OCI-LY7 (cell line): ENCODE measurements at regions of chr12 and their contacts with region 1.

Region 1: DNA sequence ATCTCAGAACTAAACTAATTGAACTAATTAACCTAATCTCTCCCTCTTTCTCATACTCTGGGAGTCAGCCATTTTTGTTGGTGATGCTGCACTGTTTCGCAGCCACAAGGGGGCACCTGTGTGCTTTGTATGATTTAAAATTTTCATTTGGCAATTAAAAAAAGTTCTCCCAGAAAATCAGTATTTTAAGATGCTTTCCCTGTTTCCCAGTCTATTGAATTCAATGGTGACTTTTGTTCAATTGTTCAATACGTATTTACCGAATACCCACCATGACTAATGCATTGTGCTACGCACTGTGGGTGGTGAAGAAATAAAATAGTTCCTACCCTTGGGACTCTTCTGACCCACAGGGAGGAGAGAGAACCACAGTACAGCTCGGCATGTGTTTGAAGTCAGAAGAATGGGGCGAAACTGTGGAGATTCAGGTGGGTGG is 63.7 kb downstream of the ZNF664 start:
- DNase-seq: peak; percentile 53
- H3K4me3 ChIP-seq: no peak overlapping the region
- H3K27ac ChIP-seq: no peak overlapping the region
- H3K4me1 ChIP-seq: no peaks in the 10 kb centered on the region
- CTCF ChIP-seq: peak; percentile 99

Region 2: GRCh38 chr12:123801573-123802178 is 235.0 kb before region 1 on chr12:
- CTCF ChIA-PET with region 1: no interaction called
- POLR2A ChIA-PET with region 1: no interaction called
- intact Hi-C with region 1: loop called (anchors 5 kb)
- DNase-seq: peak; percentile 28
- H3K4me3 ChIP-seq: no peak overlapping the region
- H3K27ac ChIP-seq: no peak overlapping the region
- H3K4me1 ChIP-seq: no peaks in the 10 kb centered on the region
- CTCF ChIP-seq: peak; percentile 80

Region 3: GRCh38 chr12:123905319-123905925 is 131.3 kb before region 1 on chr12:
- CTCF ChIA-PET with region 1: no interaction called
- POLR2A ChIA-PET with region 1: no interaction called
- intact Hi-C with region 1: loop called (anchors 5 kb)
- DNase-seq: peak; percentile 56
- H3K4me3 ChIP-seq: no peak overlapping the region
- H3K27ac ChIP-seq: no peak overlapping the region
- H3K4me1 ChIP-seq: no peaks in the 10 kb centered on the region
- CTCF ChIP-seq: peak; percentile 94

Region 4: DNA sequence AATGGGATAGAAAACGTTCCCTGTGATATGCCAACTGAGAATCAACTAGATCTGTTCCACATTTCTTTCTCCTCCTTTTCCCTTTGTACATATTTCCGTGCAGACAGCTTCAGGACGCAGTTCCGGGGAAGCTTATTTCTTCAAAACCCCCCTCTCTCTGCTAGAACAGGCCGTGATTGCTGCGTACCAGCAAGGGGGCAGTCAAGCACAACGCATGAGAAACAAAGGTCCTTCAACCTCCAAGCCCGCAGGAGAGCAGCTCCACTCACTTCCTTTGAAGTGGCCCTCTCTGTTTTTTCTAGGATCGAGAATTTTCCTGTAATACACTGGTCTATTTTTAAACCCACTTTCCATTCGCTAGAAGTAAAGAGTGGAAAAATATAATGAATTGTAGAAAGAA is 17.2 kb after region 1 on chr12:
- CTCF ChIA-PET with region 1: no interaction called
- POLR2A ChIA-PET with region 1: no interaction called
- intact Hi-C with region 1: no loop called
- DNase-seq: peak; percentile 6
- H3K4me3 ChIP-seq: no peak overlapping the region
- H3K27ac ChIP-seq: no peak overlapping the region
- H3K4me1 ChIP-seq: no peaks in the 10 kb centered on the region
- CTCF ChIP-seq: 0 out of 2 replicates have a peak, but pooled peaks have one; percentile 32

Region 5: GRCh38 chr12:124321040-124321481 is 284.4 kb after region 1 on chr12:
- CTCF ChIA-PET with region 1: no interaction called
- POLR2A ChIA-PET with region 1: no interaction called
- intact Hi-C with region 1: loop called (anchors 1 kb)
- DNase-seq: peak; percentile 47
- H3K4me3 ChIP-seq: no peak overlapping the region
- H3K27ac ChIP-seq: no peak overlapping the region
- H3K4me1 ChIP-seq: no peaks in the 10 kb centered on the region
- CTCF ChIP-seq: peak; percentile 85

Region 6: DNA sequence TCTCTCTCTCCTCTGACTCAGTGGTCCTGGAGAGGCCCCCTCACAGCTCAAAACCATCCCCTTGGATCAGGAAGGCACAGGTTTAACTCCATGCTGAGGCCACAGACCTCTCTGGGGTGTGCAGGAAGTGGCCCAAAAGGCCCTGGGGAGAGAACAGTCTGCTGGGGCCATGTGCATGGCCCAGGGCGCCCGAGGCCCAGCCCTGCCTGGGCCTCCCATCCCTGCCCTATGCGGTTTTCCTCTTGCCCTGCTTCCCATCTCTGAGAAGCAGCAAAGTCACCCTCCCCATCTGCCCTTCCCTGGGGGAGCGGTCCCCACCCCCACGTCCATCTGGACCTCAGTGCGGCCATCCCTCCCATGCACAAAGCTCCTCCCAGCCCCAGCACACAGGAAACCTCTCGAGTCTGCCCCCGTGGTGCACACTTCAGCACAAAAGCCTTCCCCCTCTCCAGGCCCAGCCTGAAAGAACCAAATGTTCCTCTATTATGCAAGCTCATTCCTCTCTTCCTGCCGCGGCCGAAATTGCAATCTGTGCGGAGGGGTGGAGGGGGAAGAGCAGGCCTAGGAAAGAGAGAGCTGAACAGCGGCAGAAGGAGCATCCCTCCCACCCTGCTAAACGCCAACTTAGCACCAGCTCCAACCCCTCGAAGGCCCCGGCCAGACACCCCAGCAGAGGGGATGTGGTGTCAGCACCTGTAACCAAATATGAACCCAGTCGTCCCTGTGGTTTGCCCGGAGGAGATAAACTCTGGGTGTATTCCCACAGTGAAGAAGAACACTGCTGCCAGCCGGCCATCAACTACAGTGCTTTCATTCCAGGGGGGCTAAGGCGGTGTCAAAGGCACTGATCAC is 718.5 kb after region 1 on chr12:
- CTCF ChIA-PET with region 1: no interaction called
- POLR2A ChIA-PET with region 1: no interaction called
- intact Hi-C with region 1: loop called (anchors 5 kb)
- DNase-seq: no peak
- H3K4me3 ChIP-seq: no peak overlapping the region
- H3K27ac ChIP-seq: no peak overlapping the region
- H3K4me1 ChIP-seq: no peaks in the 10 kb centered on the region
- CTCF ChIP-seq: no peak